Common myeloid progenitor, CD34-positive (primary cell): ENCODE measurements at regions of chr2 and their contacts with region 1.

Region 1: GRCh38 chr2:68751397-68752339 is 17.1 kb downstream of the ARHGAP25 start:
- DNase-seq: peak; percentile 91 to 96 (median 94)
- H3K4me3 ChIP-seq: peak overlapping the region in 2 of 7 experiments; percentile 19 to 27
- H3K27ac ChIP-seq: peak overlapping the region in 1 of 2 experiments; percentile 62
- H3K4me1 ChIP-seq: peaks cover 16 to 62% (median 39%) of the 10 kb centered on the region in 4 experiments
- H3K27me3 ChIP-seq: no peaks in the 10 kb centered on the region

Region 2: GRCh38 chr2:68467077-68467960 is 284.3 kb before region 1 on chr2 and contains the starts of genes APLF and FBXO48:
- CTCF ChIA-PET with region 1: interaction called, 11 read pairs
- POLR2A ChIA-PET with region 1: no interaction called
- DNase-seq: peak; percentile 99 to 100 (median 99)
- H3K4me3 ChIP-seq: peak within 1 kb of the TSS; percentile 79 to 98 (median 96)
- H3K27ac ChIP-seq: peak within 1 kb of the TSS; percentile 91 to 96
- H3K4me1 ChIP-seq: peaks cover 2 to 29% (median 18%) of the 10 kb centered on the region in 4 experiments
- H3K27me3 ChIP-seq: no peaks in the 10 kb centered on the region

Region 3: DNA sequence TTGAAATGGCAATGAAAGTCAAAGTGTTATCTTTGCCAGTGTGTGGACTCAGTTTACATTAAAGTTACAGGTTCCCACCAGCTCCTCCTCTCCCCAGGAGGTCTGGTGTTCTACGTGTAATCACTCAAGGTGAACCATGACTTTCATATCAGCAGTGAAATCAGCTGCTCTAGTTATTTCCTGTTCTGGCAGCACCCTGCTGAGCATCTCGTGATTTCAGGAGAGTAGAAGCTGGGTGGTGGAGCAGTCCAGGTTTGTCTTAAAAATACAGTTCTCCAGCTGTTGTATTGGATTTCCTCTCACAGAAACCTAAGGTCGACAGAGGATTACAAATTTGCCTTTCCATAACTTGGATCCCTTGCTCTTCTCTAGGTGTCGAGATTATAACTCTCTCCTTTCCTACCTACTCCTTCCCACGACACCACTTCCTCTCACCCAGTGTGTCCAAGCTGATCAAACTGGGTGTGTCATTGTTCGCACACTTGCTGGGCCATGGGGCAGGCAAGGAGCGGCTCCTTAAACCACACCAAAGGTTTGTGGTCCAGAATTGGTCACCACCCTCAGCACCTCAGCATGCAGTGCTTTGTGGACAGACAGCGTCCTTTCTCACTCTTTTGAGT is 30.1 kb before region 1 on chr2:
- CTCF ChIA-PET with region 1: interaction called, 106 read pairs
- POLR2A ChIA-PET with region 1: no interaction called
- DNase-seq: peak in 2 of 3 donors; percentile 48 to 69
- H3K4me3 ChIP-seq: peak overlapping the region in 1 of 7 experiments; percentile 21
- H3K27ac ChIP-seq: peak overlapping the region in 1 of 2 experiments; percentile 35
- H3K4me1 ChIP-seq: peaks cover 19 to 81% (median 66%) of the 10 kb centered on the region in 4 experiments
- H3K27me3 ChIP-seq: no peaks in the 10 kb centered on the region

Region 4: DNA sequence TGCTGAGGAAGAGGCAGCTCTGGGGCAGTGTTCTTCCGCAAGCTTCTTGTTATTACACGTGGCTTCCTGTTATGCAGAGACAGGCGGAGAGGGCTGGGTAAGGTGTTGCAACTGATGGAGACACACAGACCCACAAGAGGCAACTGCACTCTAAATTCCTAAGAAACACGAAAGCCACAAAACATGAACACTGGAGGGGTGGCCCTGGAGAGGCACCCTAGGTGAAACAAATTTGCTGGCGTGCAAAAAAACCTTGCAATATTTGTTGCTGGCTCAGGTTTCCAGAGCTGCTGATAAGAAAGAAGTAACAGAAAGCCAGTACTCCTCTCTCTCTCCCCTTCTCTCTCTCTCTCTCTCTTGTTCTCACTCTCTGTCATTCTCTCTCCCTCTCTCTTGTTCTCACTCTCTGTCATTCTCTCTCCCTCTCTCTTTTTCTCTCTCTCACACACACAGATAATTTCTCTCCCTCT is 14.7 kb after region 1 on chr2:
- CTCF ChIA-PET with region 1: interaction called, 33 read pairs
- POLR2A ChIA-PET with region 1: no interaction called
- DNase-seq: peak; percentile 50 to 89 (median 84)
- H3K4me3 ChIP-seq: peak overlapping the region in 6 of 7 experiments; percentile 16 to 50 (median 36)
- H3K27ac ChIP-seq: peak overlapping the region; percentile 29 to 79
- H3K4me1 ChIP-seq: peaks cover 81 to 100% (median 95%) of the 10 kb centered on the region in 4 experiments
- H3K27me3 ChIP-seq: no peaks in the 10 kb centered on the region

Region 5: DNA sequence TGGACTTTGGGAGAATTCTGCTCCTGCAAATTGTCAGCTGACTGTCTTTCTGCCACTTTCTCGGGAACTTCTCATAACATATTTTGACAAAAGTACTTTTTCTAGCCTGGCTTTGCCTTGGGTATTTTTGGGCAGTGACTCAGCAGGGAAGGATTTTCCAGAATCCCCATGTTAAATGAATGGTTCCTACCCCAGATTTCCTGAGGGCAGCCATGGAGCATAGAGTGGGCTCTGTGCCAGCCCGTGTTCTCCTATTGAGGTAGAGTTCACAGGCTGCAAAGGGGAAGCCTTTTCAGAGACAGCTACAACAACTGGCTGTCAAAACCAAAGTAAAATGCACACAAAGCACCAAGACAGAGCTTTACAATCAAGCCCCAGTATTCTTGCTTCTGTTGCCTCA is 59.7 kb after region 1 on chr2:
- CTCF ChIA-PET with region 1: interaction called, 19 read pairs
- POLR2A ChIA-PET with region 1: no interaction called
- DNase-seq: peak in 2 of 3 donors; percentile 29 to 36
- H3K4me3 ChIP-seq: no peak overlapping the region
- H3K27ac ChIP-seq: peak overlapping the region in 1 of 2 experiments; percentile 29
- H3K4me1 ChIP-seq: peaks cover 8 to 55% (median 36%) of the 10 kb centered on the region in 4 experiments
- H3K27me3 ChIP-seq: no peaks in the 10 kb centered on the region

Region 6: GRCh38 chr2:68837164-68837860 is 85.6 kb after region 1 on chr2:
- CTCF ChIA-PET with region 1: interaction called, 43 read pairs
- POLR2A ChIA-PET with region 1: no interaction called
- DNase-seq: peak; percentile 86 to 94 (median 94)
- H3K4me3 ChIP-seq: peak overlapping the region in 1 of 7 experiments; percentile 24
- H3K27ac ChIP-seq: no peak overlapping the region
- H3K4me1 ChIP-seq: peaks cover 31 to 56% (median 51%) of the 10 kb centered on the region in 4 experiments
- H3K27me3 ChIP-seq: no peaks in the 10 kb centered on the region

Region 7: GRCh38 chr2:68925295-68925896 is 173.7 kb after region 1 on chr2:
- CTCF ChIA-PET with region 1: interaction called, 60 read pairs
- POLR2A ChIA-PET with region 1: no interaction called
- DNase-seq: peak; percentile 61 to 77 (median 71)
- H3K4me3 ChIP-seq: no peak overlapping the region
- H3K27ac ChIP-seq: no peak overlapping the region
- H3K4me1 ChIP-seq: peaks cover 0 to 4% (median 2%) of the 10 kb centered on the region in 4 experiments
- H3K27me3 ChIP-seq: no peaks in the 10 kb centered on the region

Region 8: DNA sequence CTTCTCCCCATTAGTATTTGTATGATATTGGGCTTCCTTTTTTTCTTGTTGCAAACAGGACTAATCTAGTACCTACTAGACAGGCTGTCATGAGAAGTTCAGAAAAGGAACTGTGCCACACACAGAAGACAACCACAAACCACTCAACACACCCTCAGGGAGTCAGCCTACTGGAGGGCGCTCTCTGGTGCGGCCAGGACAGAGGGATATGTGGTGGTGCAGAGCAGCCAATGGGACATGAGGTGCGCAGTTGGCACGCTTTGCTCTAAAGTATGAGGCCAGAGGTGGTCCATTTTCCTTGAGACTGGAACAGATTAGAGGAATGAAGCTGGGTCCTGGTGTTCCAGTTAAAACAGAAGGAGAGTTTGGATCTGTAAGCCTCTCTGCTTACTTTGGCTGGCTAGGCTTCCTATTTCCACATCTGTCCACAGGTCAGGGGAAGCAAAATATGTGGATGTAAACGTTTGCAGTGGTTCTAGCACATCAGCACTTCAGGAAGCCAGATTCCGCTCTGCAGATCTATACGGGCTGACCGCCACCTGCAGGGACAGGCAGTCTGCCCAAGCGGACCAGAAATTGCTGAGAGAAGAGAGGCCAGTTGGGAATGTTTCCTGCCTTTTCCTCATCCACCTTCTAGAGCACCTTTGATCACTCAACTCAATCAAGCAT is 521.3 kb after region 1 on chr2:
- CTCF ChIA-PET with region 1: no interaction called
- POLR2A ChIA-PET with region 1: no interaction called
- DNase-seq: peak in 2 of 3 donors; percentile 11 to 24
- H3K4me3 ChIP-seq: no peak overlapping the region
- H3K27ac ChIP-seq: no peak overlapping the region
- H3K4me1 ChIP-seq: peaks cover 0 to 18% (median 0%) of the 10 kb centered on the region in 4 experiments
- H3K27me3 ChIP-seq: peaks cover 0 to 2% (median 0%) of the 10 kb centered on the region in 5 experiments